ENCODE measurements at regions of chr3 and their contacts with region 1.

Region 1: DNA sequence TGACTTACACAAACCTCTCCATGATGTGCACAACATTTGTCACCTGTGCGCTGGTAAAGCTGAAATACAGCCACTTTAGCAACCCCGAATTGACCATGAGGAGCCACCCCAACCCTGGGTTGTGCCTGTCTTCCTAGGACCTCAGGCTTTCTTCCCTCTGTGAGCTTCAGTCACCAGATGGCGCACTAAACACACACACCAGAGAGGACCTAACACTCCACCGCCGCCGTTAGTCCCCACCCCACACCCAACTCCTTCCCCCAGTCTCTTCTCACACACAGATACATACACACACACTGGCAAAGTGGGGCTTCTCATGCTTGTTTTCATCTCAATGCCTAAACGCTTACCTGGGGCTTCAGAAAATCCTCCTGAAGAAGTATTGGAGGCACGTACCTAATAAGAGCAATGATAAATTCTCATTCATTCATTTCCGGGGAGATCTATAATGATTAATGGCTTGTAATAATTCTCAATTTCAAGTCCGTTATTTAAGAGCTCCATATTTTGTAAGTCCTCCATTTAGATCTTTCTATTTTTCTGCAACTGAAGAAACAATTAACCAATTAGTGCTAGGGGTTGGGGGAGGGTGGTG is 2.1 kb upstream of the CCDC80 start:
- DNase-seq: peak; percentile 65 to 87 (median 73)
- H3K4me3 ChIP-seq: peak overlapping the region; percentile 34
- H3K4me3 Mint-ChIP-seq: peak overlapping the region; percentile 14 to 85 (median 77)
- H3K27ac ChIP-seq: no peak overlapping the region
- H3K27ac Mint-ChIP-seq: peak overlapping the region in 6 of 8 donors; percentile 9 to 81 (median 52)
- H3K4me1 ChIP-seq: peaks cover 10% of the 10 kb centered on the region
- H3K4me1 Mint-ChIP-seq: peaks cover 18 to 24% (median 23%) of the 10 kb centered on the region in 3 donors
- H3K27me3 ChIP-seq: no peaks in the 10 kb centered on the region
- H3K27me3 Mint-ChIP-seq: no peaks in the 10 kb centered on the region

Region 2: DNA sequence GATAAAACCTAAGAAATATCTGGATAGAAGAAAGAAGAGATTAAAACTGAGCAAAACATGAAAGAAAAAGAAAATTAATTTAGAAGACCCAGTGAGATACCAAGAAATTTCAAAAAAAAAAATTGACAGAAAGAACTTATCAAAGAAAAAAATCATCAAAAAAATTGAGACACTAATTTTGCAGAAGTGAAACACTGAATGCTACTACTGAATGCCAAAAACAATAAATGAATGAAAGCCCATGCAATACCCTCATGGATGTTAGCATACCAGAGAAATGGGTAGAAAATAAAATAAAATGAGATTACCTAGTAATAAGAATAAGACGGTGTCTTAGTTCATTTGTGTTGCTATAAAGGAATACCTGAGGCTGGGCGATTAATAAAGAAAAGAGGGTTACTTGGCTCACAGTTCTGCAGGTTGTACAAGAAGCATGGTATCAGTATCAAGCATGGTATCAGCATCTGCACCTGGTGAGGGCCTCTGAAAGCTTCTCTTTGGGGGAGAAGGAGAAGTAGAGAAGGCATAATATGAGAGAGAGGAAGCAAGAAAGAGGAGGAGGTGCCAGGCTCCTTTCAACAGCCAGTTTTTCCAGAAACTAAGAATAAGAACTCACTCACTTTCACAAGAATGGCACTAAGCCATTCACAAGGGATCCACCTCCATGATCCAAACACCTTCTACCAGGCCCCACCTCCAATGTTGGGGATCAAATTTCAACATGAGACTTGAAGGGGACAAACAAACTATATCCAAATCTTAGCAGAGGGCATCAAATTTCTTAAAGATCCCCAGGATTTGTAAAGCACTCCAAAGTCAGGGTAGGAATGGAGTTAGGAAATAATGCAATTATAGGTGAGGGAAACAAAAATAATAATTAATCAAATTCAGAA is 216.9 kb before region 1 on chr3:
- CTCF ChIA-PET with region 1: no interaction called
- POLR2A ChIA-PET with region 1: no interaction called
- DNase-seq: no peak
- H3K4me3 ChIP-seq: no peak overlapping the region
- H3K4me3 Mint-ChIP-seq: no peak overlapping the region
- H3K27ac ChIP-seq: no peak overlapping the region
- H3K27ac Mint-ChIP-seq: peak overlapping the region in 1 of 8 donors; percentile 20
- H3K4me1 ChIP-seq: no peaks in the 10 kb centered on the region
- H3K4me1 Mint-ChIP-seq: no peaks in the 10 kb centered on the region
- H3K27me3 ChIP-seq: no peaks in the 10 kb centered on the region
- H3K27me3 Mint-ChIP-seq: no peaks in the 10 kb centered on the region

Region 3: DNA sequence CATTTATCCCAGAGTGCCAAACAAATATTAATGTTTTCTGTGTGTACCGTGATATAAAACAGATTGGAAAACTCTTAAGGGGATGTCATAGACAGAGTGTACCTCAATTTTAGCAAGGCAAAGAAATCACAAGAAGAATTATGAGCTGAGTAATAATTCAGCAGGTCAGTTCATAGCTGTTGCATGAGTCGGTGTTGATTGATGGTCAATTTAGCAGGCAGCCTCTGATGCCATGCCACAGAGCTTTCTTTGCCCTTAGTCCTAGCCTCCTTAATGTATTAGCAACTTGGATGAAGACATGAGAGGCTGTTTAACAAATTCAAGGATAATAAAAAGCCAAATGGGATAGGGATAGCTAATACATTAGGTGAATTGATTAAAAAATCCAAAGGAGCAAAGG is 74.4 kb before region 1 on chr3:
- CTCF ChIA-PET with region 1: no interaction called
- POLR2A ChIA-PET with region 1: no interaction called
- DNase-seq: no peak
- H3K4me3 ChIP-seq: no peak overlapping the region
- H3K4me3 Mint-ChIP-seq: no peak overlapping the region
- H3K27ac ChIP-seq: no peak overlapping the region
- H3K27ac Mint-ChIP-seq: no peak overlapping the region
- H3K4me1 ChIP-seq: no peaks in the 10 kb centered on the region
- H3K4me1 Mint-ChIP-seq: peaks cover 15 to 42% (median 32%) of the 10 kb centered on the region in 3 donors
- H3K27me3 ChIP-seq: no peaks in the 10 kb centered on the region
- H3K27me3 Mint-ChIP-seq: no peaks in the 10 kb centered on the region

Region 4: GRCh38 chr3:112653209-112653871 is 10.3 kb after region 1 on chr3:
- CTCF ChIA-PET with region 1: interaction called, 13 read pairs
- POLR2A ChIA-PET with region 1: interaction called, 3 read pairs
- DNase-seq: no peak
- H3K4me3 ChIP-seq: no peak overlapping the region
- H3K4me3 Mint-ChIP-seq: no peak overlapping the region
- H3K27ac ChIP-seq: no peak overlapping the region
- H3K27ac Mint-ChIP-seq: no peak overlapping the region
- H3K4me1 ChIP-seq: no peaks in the 10 kb centered on the region
- H3K4me1 Mint-ChIP-seq: peaks cover 3 to 16% (median 16%) of the 10 kb centered on the region in 3 donors
- H3K27me3 ChIP-seq: no peaks in the 10 kb centered on the region
- H3K27me3 Mint-ChIP-seq: no peaks in the 10 kb centered on the region

Region 5: DNA sequence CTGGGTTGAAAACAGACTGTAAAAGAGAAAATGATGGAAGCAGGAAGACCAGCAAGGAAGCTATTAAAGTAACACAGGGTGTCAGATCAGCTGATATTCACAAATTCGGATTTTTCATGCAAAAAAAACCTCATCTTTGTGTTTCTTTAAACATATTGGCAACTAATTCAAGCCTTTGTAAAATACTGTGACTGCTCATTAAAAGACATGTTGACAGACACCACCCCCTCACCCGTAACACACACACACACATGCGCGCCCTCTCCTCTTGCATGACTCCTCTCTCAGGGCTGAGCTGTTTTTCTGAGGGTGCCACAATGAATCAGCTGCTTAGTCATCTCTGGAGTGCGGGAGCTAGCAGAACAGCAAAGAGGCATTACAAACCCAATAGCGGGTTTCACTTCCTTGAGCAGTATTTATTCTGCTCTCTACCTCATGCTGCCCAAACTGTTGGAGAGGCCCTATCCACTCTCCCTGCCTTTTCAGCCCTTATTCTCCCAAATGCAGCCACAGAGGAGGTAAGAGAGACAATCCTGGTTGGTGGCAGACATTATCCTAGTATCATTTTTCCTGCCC is 33.7 kb after region 1 on chr3:
- CTCF ChIA-PET with region 1: interaction called, 11 read pairs
- POLR2A ChIA-PET with region 1: no interaction called
- DNase-seq: peak in 4 of 5 donors; percentile 24 to 90 (median 54)
- H3K4me3 ChIP-seq: no peak overlapping the region
- H3K4me3 Mint-ChIP-seq: peak overlapping the region; percentile 1 to 66 (median 51)
- H3K27ac ChIP-seq: no peak overlapping the region
- H3K27ac Mint-ChIP-seq: peak overlapping the region; percentile 11 to 87 (median 75)
- H3K4me1 ChIP-seq: peaks cover 44% of the 10 kb centered on the region
- H3K4me1 Mint-ChIP-seq: peaks cover 52 to 68% (median 64%) of the 10 kb centered on the region in 3 donors
- H3K27me3 ChIP-seq: no peaks in the 10 kb centered on the region
- H3K27me3 Mint-ChIP-seq: peaks cover 0 to 1% of the 10 kb centered on the region in 2 donors

Region 6: DNA sequence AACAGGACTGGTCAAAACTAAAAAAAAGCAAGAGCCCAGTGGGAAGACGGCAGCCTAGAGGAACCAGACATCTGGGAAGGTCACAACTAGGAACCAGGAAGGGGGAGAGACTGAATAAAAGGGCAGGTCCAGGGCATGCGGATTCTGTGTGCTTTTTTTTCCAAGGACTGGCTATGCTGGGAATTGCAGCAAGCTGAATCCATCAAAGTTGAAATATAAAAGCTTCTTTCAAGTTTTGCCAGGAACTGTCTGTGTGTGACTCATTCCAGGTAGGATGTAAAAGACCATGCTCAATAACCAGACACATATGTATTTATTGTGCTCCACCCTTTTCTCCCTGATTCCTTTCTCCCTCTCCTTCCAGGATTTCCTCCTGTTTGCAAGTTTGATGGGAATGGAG is 45.8 kb after region 1 on chr3:
- CTCF ChIA-PET with region 1: no interaction called
- POLR2A ChIA-PET with region 1: no interaction called
- DNase-seq: no peak
- H3K4me3 ChIP-seq: no peak overlapping the region
- H3K4me3 Mint-ChIP-seq: peak overlapping the region in 1 of 7 donors; percentile 11
- H3K27ac ChIP-seq: no peak overlapping the region
- H3K27ac Mint-ChIP-seq: peak overlapping the region in 1 of 8 donors; percentile 64
- H3K4me1 ChIP-seq: no peaks in the 10 kb centered on the region
- H3K4me1 Mint-ChIP-seq: peaks cover 14 to 19% (median 17%) of the 10 kb centered on the region in 3 donors
- H3K27me3 ChIP-seq: no peaks in the 10 kb centered on the region
- H3K27me3 Mint-ChIP-seq: peaks cover 0 to 7% of the 10 kb centered on the region in 2 donors

Region 7: DNA sequence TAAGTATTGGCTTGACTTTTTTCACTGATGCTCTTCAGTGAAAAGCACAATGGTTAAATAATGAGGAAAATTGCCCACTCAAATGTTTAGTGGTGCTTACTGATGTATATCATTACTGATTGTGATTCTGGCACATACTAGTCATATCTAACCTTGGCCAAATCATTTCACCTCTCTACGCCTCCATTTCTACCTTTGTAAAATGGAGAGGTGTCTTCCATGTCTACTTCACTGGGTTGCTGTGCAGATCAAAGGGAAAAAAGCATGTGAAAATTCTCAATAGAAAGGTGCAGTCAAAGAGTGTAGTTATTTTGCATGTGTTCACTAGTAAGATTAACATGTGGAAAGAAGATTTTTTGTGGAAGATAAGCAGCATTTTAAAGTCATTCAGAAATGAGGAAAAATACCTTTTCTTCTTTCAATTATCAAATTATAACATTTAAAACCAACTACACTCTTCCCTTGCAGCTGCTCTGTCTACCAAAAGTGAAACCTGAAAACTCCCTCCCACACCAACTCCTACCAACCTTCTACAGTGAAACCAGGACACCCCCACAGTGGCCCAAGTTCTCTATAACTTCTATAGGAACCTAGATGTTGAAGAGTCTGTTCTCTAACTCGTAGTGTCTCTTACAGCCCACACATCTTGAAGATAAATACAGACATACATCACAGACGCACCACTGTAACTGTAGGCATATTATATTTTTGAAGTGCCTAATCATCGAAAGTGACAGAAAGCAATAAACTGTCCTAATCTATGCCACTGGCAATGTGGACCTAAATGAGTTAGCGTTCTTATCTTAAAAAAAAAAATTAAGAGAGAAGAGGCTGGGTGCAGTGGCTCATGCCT is 330.5 kb after region 1 on chr3:
- CTCF ChIA-PET with region 1: interaction called, 51 read pairs
- POLR2A ChIA-PET with region 1: no interaction called
- DNase-seq: peak in 3 of 5 donors; percentile 39 to 56 (median 55)
- H3K4me3 ChIP-seq: peak overlapping the region; percentile 60
- H3K4me3 Mint-ChIP-seq: peak overlapping the region; percentile 89 to 96 (median 95)
- H3K27ac ChIP-seq: peak overlapping the region; percentile 45
- H3K27ac Mint-ChIP-seq: peak overlapping the region; percentile 80 to 97 (median 91)
- H3K4me1 ChIP-seq: peaks cover 55% of the 10 kb centered on the region
- H3K4me1 Mint-ChIP-seq: peaks cover 66 to 94% (median 93%) of the 10 kb centered on the region in 3 donors
- H3K27me3 ChIP-seq: no peaks in the 10 kb centered on the region
- H3K27me3 Mint-ChIP-seq: no peaks in the 10 kb centered on the region

Region 8: GRCh38 chr3:112979240-112979832 is 336.3 kb after region 1 on chr3:
- CTCF ChIA-PET with region 1: interaction called, 51 read pairs
- POLR2A ChIA-PET with region 1: no interaction called
- DNase-seq: peak in 2 of 5 donors; percentile 47 to 57
- H3K4me3 ChIP-seq: no peak overlapping the region
- H3K4me3 Mint-ChIP-seq: peak overlapping the region in 1 of 7 donors; percentile 49
- H3K27ac ChIP-seq: no peak overlapping the region
- H3K27ac Mint-ChIP-seq: peak overlapping the region in 1 of 8 donors; percentile 5
- H3K4me1 ChIP-seq: peaks cover 52% of the 10 kb centered on the region
- H3K4me1 Mint-ChIP-seq: peaks cover 48 to 75% (median 68%) of the 10 kb centered on the region in 3 donors
- H3K27me3 ChIP-seq: no peaks in the 10 kb centered on the region
- H3K27me3 Mint-ChIP-seq: no peaks in the 10 kb centered on the region

Region 9: GRCh38 chr3:113035387-113035982 is 392.5 kb after region 1 on chr3:
- CTCF ChIA-PET with region 1: interaction called, 21 read pairs
- POLR2A ChIA-PET with region 1: no interaction called
- DNase-seq: peak in 3 of 5 donors; percentile 1 to 39 (median 24)
- H3K4me3 ChIP-seq: no peak overlapping the region
- H3K4me3 Mint-ChIP-seq: no peak overlapping the region
- H3K27ac ChIP-seq: no peak overlapping the region
- H3K27ac Mint-ChIP-seq: no peak overlapping the region
- H3K4me1 ChIP-seq: no peaks in the 10 kb centered on the region
- H3K4me1 Mint-ChIP-seq: no peaks in the 10 kb centered on the region
- H3K27me3 ChIP-seq: no peaks in the 10 kb centered on the region
- H3K27me3 Mint-ChIP-seq: no peaks in the 10 kb centered on the region

Region 10: GRCh38 chr3:113287803-113288648 is 645.0 kb after region 1 on chr3:
- CTCF ChIA-PET with region 1: interaction called, 16 read pairs
- POLR2A ChIA-PET with region 1: no interaction called
- DNase-seq: peak in 3 of 5 donors; percentile 16 to 34 (median 18)
- H3K4me3 ChIP-seq: no peak overlapping the region
- H3K4me3 Mint-ChIP-seq: no peak overlapping the region
- H3K27ac ChIP-seq: no peak overlapping the region
- H3K27ac Mint-ChIP-seq: no peak overlapping the region
- H3K4me1 ChIP-seq: no peaks in the 10 kb centered on the region
- H3K4me1 Mint-ChIP-seq: no peaks in the 10 kb centered on the region
- H3K27me3 ChIP-seq: no peaks in the 10 kb centered on the region
- H3K27me3 Mint-ChIP-seq: peaks cover 0 to 3% of the 10 kb centered on the region in 2 donors